ENCODE measurements at regions of chr2 and their contacts with region 1.

Region 1: GRCh38 chr2:191218292-191218898 is 26.8 kb upstream of the MYO1B start:
- DNase-seq: peak in 2 of 4 donors; percentile 41 to 80
- ATAC-seq: peak; percentile 59
- H3K4me3 ChIP-seq: no peak overlapping the region
- H3K27ac ChIP-seq: peak overlapping the region in 1 of 2 donors; percentile 50
- H3K4me1 ChIP-seq: peaks cover 13 to 26% of the 10 kb centered on the region in 2 donors
- H3K27me3 ChIP-seq: no peaks in the 10 kb centered on the region
- CTCF ChIP-seq: peak; percentile 54 to 64

Region 2: GRCh38 chr2:191501561-191502168 is 283.3 kb after region 1 on chr2:
- intact Hi-C with region 1: loop called in 1 of 2 experiments (anchors 5 kb)
- DNase-seq: peak in 1 of 4 donors; percentile 64
- ATAC-seq: peak; percentile 78
- H3K4me3 ChIP-seq: no peak overlapping the region
- H3K27ac ChIP-seq: peak overlapping the region; percentile 4 to 36
- H3K4me1 ChIP-seq: peaks cover 4 to 8% of the 10 kb centered on the region in 2 donors
- H3K27me3 ChIP-seq: no peaks in the 10 kb centered on the region
- CTCF ChIP-seq: peak; percentile 41 to 56